ENCODE measurements at regions of chr6 and their contacts with region 1.

Region 1: DNA sequence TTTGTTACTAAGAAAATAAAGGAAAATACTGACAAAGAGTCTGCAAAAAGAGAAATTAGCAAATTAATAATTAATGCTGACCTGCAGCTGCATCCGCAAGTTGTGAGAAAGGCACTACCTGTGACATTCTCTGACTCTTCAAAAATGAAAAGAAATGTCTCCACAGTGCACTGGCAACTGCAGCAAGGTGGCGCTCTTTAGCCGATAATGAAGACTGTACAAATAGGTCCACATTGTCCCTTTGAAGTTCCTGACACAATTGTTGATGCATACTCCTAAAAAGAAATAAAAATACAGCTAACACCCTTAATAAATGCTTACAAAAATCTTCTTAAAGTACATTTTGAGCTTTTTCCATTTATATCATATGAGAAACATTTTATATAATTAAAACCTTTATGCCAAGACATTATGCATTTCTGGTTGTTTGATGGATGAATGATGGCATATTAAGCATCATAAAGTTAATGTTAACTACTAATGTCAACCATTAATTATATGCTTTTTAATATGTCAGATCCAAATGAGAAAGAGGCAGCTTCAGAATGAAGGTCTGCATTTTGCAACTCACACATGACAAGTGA is 96.5 kb downstream of the MMS22L start:
- DNase-seq: peak; percentile 45 to 60 (median 50)
- ATAC-seq: peak in 3 of 4 donors; percentile 61 to 74 (median 66)
- H3K4me3 ChIP-seq: no peak overlapping the region
- H3K27ac ChIP-seq: no peak overlapping the region
- H3K4me1 ChIP-seq: peaks cover 0 to 3% (median 0%) of the 10 kb centered on the region in 12 donors
- H3K27me3 ChIP-seq: no peaks in the 10 kb centered on the region
- CTCF ChIP-seq: peak; percentile 70 to 92 (median 85)
- POLR2A ChIP-seq: no peak

Region 2: DNA sequence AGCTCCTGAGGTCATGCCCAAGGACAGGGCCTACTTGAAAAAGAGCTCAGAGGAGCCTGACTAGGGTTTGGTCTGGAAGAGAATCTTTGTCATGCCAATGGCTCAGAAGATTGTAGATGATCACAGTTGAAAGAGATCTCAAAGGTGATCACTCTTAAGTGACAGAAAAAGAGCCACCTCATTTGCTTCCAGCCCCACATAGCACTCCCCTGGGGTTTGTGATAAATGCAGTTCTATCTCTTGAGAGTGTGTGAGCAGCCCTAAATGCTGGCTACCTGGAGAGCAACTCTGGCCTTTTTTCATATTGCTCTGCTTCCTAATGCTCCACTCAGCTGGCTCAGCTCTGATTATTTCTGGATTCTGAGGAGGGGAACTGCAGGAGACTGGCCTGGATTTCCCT is 222.7 kb before region 1 on chr6:
- intact Hi-C with region 1: no loop called
- DNase-seq: no peak
- ATAC-seq: no peak
- H3K4me3 ChIP-seq: no peak overlapping the region
- H3K27ac ChIP-seq: no peak overlapping the region
- H3K4me1 ChIP-seq: peaks cover 0 to 3% (median 0%) of the 10 kb centered on the region in 12 donors
- H3K27me3 ChIP-seq: no peaks in the 10 kb centered on the region
- CTCF ChIP-seq: no peak
- POLR2A ChIP-seq: no peak

Region 3: DNA sequence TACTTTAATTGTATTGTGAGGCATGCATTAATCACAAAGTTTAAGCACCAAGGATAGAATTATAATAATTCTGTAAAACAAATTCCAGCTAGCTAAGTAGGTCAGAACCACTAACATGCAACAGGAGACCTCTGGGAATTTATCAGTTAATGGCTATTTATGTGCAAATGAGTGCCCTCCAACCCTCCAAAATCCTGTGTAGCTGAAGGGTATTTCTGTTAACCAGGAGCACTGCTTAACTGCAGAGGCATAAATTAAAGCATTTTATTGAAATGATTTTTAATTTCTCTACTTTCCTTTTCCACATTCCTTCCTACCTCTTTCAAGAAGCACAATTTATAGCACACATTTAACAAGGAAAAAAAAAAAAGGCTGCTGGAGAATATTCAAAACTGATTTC is 19.5 kb after region 1 on chr6:
- intact Hi-C with region 1: loop called in 1 of 10 experiments (anchors 1 kb)
- DNase-seq: no peak
- ATAC-seq: no peak
- H3K4me3 ChIP-seq: no peak overlapping the region
- H3K27ac ChIP-seq: no peak overlapping the region
- H3K4me1 ChIP-seq: no peaks in the 10 kb centered on the region
- H3K27me3 ChIP-seq: no peaks in the 10 kb centered on the region
- CTCF ChIP-seq: no peak
- POLR2A ChIP-seq: no peak

Region 4: GRCh38 chr6:97262676-97263075 is 76.2 kb after region 1 on chr6:
- intact Hi-C with region 1: no loop called
- DNase-seq: no peak
- ATAC-seq: no peak
- H3K4me3 ChIP-seq: no peak overlapping the region
- H3K27ac ChIP-seq: no peak overlapping the region
- H3K4me1 ChIP-seq: no peaks in the 10 kb centered on the region
- H3K27me3 ChIP-seq: no peaks in the 10 kb centered on the region
- CTCF ChIP-seq: no peak
- POLR2A ChIP-seq: no peak

Region 5: DNA sequence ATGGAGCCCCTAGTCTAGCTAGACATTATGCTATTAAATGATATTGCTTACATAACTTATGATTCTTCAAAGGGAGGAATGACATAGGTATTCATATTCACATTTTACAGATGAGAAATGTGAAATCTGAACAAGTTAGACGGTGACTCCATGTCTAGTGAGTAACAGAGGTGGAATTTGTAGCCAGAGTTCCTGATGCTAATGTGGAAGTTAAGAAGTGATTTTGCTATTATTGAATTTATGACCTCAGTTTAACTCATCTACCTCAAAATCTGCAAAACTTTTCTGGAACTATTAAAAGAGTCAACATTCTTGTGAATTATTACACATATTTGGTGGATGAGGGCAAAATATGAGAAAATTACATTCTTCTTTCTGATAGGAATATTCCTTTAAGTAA is 444.1 kb after region 1 on chr6:
- intact Hi-C with region 1: no loop called
- DNase-seq: no peak
- ATAC-seq: no peak
- H3K4me3 ChIP-seq: no peak overlapping the region
- H3K27ac ChIP-seq: no peak overlapping the region
- H3K4me1 ChIP-seq: peaks cover 0 to 4% (median 0%) of the 10 kb centered on the region in 12 donors
- H3K27me3 ChIP-seq: no peaks in the 10 kb centered on the region
- CTCF ChIP-seq: no peak
- POLR2A ChIP-seq: no peak

Measured in heart left ventricle (tissue), 16 donors.